GM12878 (cell line): ENCODE measurements at regions of chr15 and their contacts with region 1.

Region 1: GRCh38 chr15:85330901-85331588 is 49.4 kb upstream of the AKAP13 start:
- DNase-seq: peak; percentile 90
- ATAC-seq: peak; percentile 83
- H3K4me3 ChIP-seq: peak overlapping the region; percentile 70
- H3K27ac ChIP-seq: peak overlapping the region; percentile 84
- H3K4me1 ChIP-seq: peaks cover 44% of the 10 kb centered on the region
- H3K27me3 ChIP-seq: no peaks in the 10 kb centered on the region
- CTCF ChIP-seq: peak; percentile 89 to 99 (median 96)
- EP300 ChIP-seq: peak in 1 of 2 experiments; percentile 56; a peak in 1 of 4 replicates
- POLR2A ChIP-seq: peak; percentile 61
- RAD21 ChIP-seq: peak; percentile 98

Region 2: GRCh38 chr15:84633311-84634227 is 697.5 kb before region 1 on chr15:
- CTCF ChIA-PET with region 1: no interaction called
- POLR2A ChIA-PET with region 1: no interaction called
- RAD21 ChIA-PET with region 1: no interaction called
- SMC1A ChIA-PET with region 1: no interaction called
- in situ Hi-C with region 1: no loop called
- intact Hi-C with region 1: no loop called
- DNase-seq: no peak
- ATAC-seq: peak; percentile 67
- H3K4me3 ChIP-seq: peak overlapping the region; percentile 65
- H3K27ac ChIP-seq: peak overlapping the region; percentile 5; the same call in 1 of the 2 replicates
- H3K4me1 ChIP-seq: peaks cover 9% of the 10 kb centered on the region
- H3K27me3 ChIP-seq: no peaks in the 10 kb centered on the region
- CTCF ChIP-seq: no peak
- EP300 ChIP-seq: no peak
- POLR2A ChIP-seq: peak; percentile 54
- RAD21 ChIP-seq: no peak

Region 3: DNA sequence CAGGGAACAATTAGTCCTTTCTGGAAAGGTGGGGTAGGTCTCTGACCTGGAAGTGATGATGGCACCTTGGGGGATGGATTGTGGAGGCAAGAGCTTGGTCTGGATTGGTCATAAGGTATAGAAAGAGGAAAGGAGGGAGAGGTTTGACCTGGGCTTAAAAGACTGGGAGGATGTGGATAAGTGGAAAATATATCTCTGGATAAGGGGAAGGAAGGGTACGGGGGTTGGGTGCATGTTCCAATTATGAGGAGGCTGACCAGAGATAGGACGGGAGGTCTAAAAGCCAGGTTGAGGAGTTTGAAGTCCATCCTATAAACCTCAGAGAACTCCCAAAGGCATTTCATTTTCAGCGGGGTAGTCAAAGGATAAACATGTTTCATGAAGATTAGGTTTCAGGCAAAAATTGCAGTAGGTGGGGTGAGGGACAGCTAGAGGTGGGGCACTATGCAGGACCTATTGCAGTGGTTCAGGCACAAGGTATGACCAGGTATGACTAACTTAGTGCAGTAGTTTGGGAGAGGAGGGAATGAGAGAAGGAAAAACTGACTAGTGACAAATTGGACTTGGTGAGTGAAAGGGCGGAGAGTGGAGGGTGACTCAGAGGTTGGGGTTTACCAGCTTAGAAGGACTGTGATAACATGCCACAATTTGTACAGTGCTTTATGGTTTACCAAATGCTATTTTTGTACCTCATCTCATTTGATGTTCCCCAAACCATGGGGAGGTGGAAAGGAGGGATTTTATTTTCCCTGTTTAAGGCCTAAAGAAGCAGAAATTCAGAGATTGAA is 338.7 kb before region 1 on chr15:
- CTCF ChIA-PET with region 1: no interaction called
- POLR2A ChIA-PET with region 1: no interaction called
- RAD21 ChIA-PET with region 1: no interaction called
- SMC1A ChIA-PET with region 1: no interaction called
- in situ Hi-C with region 1: no loop called
- intact Hi-C with region 1: no loop called
- DNase-seq: no peak
- ATAC-seq: peak; percentile 51
- H3K4me3 ChIP-seq: no peak overlapping the region
- H3K27ac ChIP-seq: peak overlapping the region; percentile 24
- H3K4me1 ChIP-seq: peaks cover 38% of the 10 kb centered on the region
- H3K27me3 ChIP-seq: no peaks in the 10 kb centered on the region
- CTCF ChIP-seq: no peak
- EP300 ChIP-seq: no peak
- POLR2A ChIP-seq: no peak
- RAD21 ChIP-seq: no peak

Region 4: GRCh38 chr15:85312486-85312885 is 18.6 kb before region 1 on chr15:
- CTCF ChIA-PET with region 1: interaction called, 115 read pairs
- POLR2A ChIA-PET with region 1: interaction called, 13 read pairs
- RAD21 ChIA-PET with region 1: interaction called, 49 read pairs
- SMC1A ChIA-PET with region 1: interaction called, 177 read pairs
- in situ Hi-C with region 1: no loop called
- intact Hi-C with region 1: no loop called
- DNase-seq: peak; percentile 77
- ATAC-seq: peak; percentile 98
- H3K4me3 ChIP-seq: peak overlapping the region; percentile 39
- H3K27ac ChIP-seq: peak overlapping the region; percentile 84
- H3K4me1 ChIP-seq: peaks cover 36% of the 10 kb centered on the region
- H3K27me3 ChIP-seq: no peaks in the 10 kb centered on the region
- CTCF ChIP-seq: no peak
- EP300 ChIP-seq: peak in 1 of 2 experiments; percentile 41; a peak in 1 of 4 replicates
- POLR2A ChIP-seq: peak; percentile 38; the same call in 1 of the 2 replicates
- RAD21 ChIP-seq: no peak

Region 5: DNA sequence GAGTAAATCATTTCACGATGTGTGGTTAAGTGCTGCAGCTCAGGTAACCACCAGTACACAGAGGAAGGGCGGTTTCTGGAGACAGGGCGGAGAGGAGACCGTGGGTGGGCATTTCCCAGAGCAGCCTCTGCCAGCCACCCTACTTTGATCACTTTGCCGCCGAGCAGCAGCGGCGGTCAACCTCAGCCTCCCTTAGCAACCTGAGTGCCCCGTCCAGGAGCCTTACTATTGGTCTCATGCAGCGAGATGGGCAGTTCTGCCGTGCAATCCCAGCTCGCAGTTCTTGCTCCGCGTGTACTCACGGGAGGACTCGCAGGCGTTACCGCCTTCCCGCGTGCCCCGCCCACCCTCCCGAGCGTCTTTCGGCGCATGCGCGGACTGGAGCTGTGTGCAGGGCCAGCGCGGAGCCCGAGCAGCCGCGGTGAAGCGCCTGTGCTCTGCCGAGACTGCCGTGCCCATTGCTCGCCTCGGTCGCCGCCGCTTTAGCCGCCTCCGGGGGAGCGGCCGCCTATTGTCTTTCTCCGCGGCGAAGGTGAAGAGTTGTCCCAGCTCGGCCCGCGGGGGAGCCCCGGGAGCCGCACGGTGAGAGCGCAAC is 49.3 kb after region 1 on chr15 and contains the start of gene AKAP13:
- CTCF ChIA-PET with region 1: interaction called, 20 read pairs
- POLR2A ChIA-PET with region 1: interaction called, 4 read pairs
- RAD21 ChIA-PET with region 1: interaction called, 16 read pairs
- SMC1A ChIA-PET with region 1: interaction called, 22 read pairs
- in situ Hi-C with region 1: no loop called
- intact Hi-C with region 1: loop called (anchors 1 kb)
- DNase-seq: peak; percentile 98
- ATAC-seq: peak; percentile 89
- H3K4me3 ChIP-seq: peak within 1 kb of the TSS; percentile 80
- H3K27ac ChIP-seq: peak within 1 kb of the TSS; percentile 78
- H3K4me1 ChIP-seq: peaks cover 12% of the 10 kb centered on the region; the same call in 1 of the 2 replicates
- H3K27me3 ChIP-seq: no peaks in the 10 kb centered on the region; a peak in 2 of 4 replicates
- CTCF ChIP-seq: no peak
- EP300 ChIP-seq: no peak
- POLR2A ChIP-seq: peak; percentile 88
- RAD21 ChIP-seq: no peak
- polyA plus RNA-seq, gene AKAP13: 14.4 to 21.5 TPM

Region 6: DNA sequence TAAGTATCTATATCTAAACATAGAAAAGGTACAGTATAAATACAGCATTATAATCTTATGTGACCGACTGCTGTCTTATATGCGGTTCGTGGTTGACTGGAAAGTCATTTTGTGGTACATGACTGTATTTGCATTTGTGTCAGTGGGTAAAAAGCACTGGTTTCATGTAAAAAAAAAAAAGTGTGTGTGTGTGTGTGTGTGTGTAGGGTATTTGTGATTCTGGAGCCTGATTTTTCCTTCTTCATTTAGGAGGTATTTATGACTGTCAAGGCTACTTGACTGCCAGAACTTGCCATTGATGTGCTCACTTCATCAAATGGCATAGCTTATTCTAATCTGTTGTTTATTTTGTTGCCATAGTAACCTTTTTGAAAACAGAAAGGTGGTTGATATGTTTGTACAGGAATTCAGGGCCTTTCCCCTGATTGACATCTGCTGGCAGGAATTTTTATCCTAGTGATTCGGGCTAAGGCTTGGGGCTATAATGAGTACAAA is 112.6 kb after region 1 on chr15:
- CTCF ChIA-PET with region 1: interaction called, 9 read pairs
- POLR2A ChIA-PET with region 1: interaction called, 3 read pairs
- RAD21 ChIA-PET with region 1: interaction called, 10 read pairs
- SMC1A ChIA-PET with region 1: interaction called, 7 read pairs
- in situ Hi-C with region 1: no loop called
- intact Hi-C with region 1: no loop called
- DNase-seq: peak; percentile 76
- ATAC-seq: peak; percentile 90
- H3K4me3 ChIP-seq: no peak overlapping the region
- H3K27ac ChIP-seq: peak overlapping the region; percentile 66; the same call in 1 of the 2 replicates
- H3K4me1 ChIP-seq: peaks cover 28% of the 10 kb centered on the region
- H3K27me3 ChIP-seq: no peaks in the 10 kb centered on the region
- CTCF ChIP-seq: no peak
- EP300 ChIP-seq: peak; percentile 68 to 89; a peak in 3 of 4 replicates
- POLR2A ChIP-seq: no peak
- RAD21 ChIP-seq: no peak

Region 7: GRCh38 chr15:85504749-85505676 is 174.0 kb after region 1 on chr15:
- CTCF ChIA-PET with region 1: interaction called, 44 read pairs
- POLR2A ChIA-PET with region 1: no interaction called
- RAD21 ChIA-PET with region 1: interaction called, 5 read pairs
- SMC1A ChIA-PET with region 1: interaction called, 19 read pairs
- in situ Hi-C with region 1: no loop called
- intact Hi-C with region 1: loop called (anchors 1 kb)
- DNase-seq: no peak
- ATAC-seq: peak; percentile 86
- H3K4me3 ChIP-seq: no peak overlapping the region
- H3K27ac ChIP-seq: no peak overlapping the region
- H3K4me1 ChIP-seq: peaks cover 18% of the 10 kb centered on the region
- H3K27me3 ChIP-seq: no peaks in the 10 kb centered on the region
- CTCF ChIP-seq: peak; percentile 38 to 59 (median 55); a peak in 5 of 6 replicates
- EP300 ChIP-seq: no peak
- POLR2A ChIP-seq: no peak
- RAD21 ChIP-seq: peak; percentile 63